Endothelial cell of umbilical vein (primary cell): ENCODE measurements at regions of chr4 and their contacts with region 1.

Region 1: DNA sequence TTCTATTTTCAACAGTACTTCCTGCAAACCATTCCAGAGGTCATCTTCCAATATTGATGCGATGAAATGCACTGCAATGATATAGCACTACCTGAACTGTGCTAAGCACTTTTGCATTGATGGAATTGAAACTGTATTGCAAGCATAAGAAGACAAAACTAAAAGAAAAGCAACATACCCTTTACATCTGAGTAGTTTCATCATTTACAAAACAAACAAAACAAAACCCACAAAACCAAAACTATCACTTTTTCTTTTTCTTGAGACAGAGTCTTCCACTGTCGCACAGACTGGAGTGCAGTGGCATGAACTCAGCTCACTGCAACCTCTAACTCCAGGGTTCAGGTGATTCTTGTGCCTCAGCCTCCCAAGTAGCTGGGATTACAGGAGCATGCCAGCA is 120.1 kb upstream of the NAP1L5 start:
- DNase-seq: no peak
- H3K4me3 ChIP-seq: no peak overlapping the region
- H3K27ac ChIP-seq: no peak overlapping the region
- H3K4me1 ChIP-seq: peaks cover 5% of the 10 kb centered on the region
- H3K27me3 ChIP-seq: no peaks in the 10 kb centered on the region
- CTCF ChIP-seq: no peak
- POLR2A ChIP-seq: no peak

Region 2: DNA sequence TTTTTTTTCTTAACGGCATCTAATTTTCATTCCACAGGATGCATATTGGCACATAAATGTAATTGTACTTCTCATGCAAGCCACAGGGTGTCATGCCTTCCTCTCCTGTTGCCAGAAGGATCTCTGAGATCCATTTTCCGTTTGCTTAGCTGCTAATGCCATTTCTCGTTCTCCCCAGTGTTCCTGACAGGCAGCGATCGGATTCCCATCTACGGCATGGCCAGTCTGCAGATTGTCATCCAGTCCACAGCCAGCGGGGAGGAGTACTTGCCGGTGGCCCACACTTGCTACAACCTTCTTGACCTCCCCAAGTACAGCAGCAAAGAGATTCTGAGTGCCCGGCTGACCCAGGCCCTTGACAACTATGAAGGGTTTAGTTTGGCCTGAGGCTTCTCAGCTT is 111.2 kb before region 1 on chr4:
- CTCF ChIA-PET with region 1: interaction called, 12 read pairs
- POLR2A ChIA-PET with region 1: no interaction called
- dilution Hi-C with region 1: no loop called
- intact Hi-C with region 1: loop called (anchors 1 kb)
- DNase-seq: peak; percentile 67
- H3K4me3 ChIP-seq: no peak overlapping the region
- H3K27ac ChIP-seq: no peak overlapping the region
- H3K4me1 ChIP-seq: no peaks in the 10 kb centered on the region
- H3K27me3 ChIP-seq: no peaks in the 10 kb centered on the region
- CTCF ChIP-seq: peak; percentile 32 to 58
- POLR2A ChIP-seq: no peak

Region 3: DNA sequence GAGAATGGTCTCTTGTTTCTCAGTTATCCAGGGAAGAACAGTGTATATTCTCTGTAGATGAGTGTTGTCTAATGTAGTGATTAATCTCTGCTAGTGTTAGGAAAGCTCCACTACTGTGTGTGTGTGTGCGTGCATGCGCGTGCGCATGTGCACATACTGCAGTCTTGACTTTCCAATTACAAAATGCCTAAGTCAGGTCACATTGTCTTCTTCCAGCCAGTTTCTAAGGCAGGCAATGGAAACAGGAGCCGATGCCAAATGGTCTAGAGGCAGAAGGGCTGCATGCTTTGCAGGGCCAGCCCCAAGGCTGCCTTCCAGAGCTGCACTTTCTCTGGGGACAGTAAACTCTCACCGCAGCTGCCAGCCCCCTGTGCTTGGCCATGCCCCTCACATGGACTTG is 89.6 kb before region 1 on chr4:
- CTCF ChIA-PET with region 1: no interaction called
- POLR2A ChIA-PET with region 1: no interaction called
- dilution Hi-C with region 1: no loop called
- intact Hi-C with region 1: no loop called
- DNase-seq: no peak
- H3K4me3 ChIP-seq: no peak overlapping the region
- H3K27ac ChIP-seq: no peak overlapping the region
- H3K4me1 ChIP-seq: peaks cover 8% of the 10 kb centered on the region
- H3K27me3 ChIP-seq: no peaks in the 10 kb centered on the region
- CTCF ChIP-seq: no peak
- POLR2A ChIP-seq: no peak

Region 4: GRCh38 chr4:88799900-88800299 is 17.8 kb before region 1 on chr4:
- CTCF ChIA-PET with region 1: no interaction called
- POLR2A ChIA-PET with region 1: no interaction called
- dilution Hi-C with region 1: no loop called
- intact Hi-C with region 1: no loop called
- DNase-seq: no peak
- H3K4me3 ChIP-seq: no peak overlapping the region
- H3K27ac ChIP-seq: no peak overlapping the region
- H3K4me1 ChIP-seq: no peaks in the 10 kb centered on the region
- H3K27me3 ChIP-seq: no peaks in the 10 kb centered on the region
- CTCF ChIP-seq: no peak
- POLR2A ChIP-seq: no peak